SK-N-SH (cell line): ENCODE measurements at regions of chr11 and their contacts with region 1.

Region 1: GRCh38 chr11:69909561-69910496 is 90.6 kb upstream of the FGF3 start:
- DNase-seq: peak; percentile 74
- H3K4me3 ChIP-seq: no peak overlapping the region
- H3K27ac ChIP-seq: peak overlapping the region in 1 of 2 experiments; percentile 55; a peak in 1 of 4 replicates
- H3K4me1 ChIP-seq: peaks cover 0 to 66% of the 10 kb centered on the region in 2 experiments; a peak in 1 of 4 replicates
- H3K27me3 ChIP-seq: no peaks in the 10 kb centered on the region
- CTCF ChIP-seq: peak; percentile 76
- EP300 ChIP-seq: no peak
- RAD21 ChIP-seq: peak; percentile 33

Region 2: DNA sequence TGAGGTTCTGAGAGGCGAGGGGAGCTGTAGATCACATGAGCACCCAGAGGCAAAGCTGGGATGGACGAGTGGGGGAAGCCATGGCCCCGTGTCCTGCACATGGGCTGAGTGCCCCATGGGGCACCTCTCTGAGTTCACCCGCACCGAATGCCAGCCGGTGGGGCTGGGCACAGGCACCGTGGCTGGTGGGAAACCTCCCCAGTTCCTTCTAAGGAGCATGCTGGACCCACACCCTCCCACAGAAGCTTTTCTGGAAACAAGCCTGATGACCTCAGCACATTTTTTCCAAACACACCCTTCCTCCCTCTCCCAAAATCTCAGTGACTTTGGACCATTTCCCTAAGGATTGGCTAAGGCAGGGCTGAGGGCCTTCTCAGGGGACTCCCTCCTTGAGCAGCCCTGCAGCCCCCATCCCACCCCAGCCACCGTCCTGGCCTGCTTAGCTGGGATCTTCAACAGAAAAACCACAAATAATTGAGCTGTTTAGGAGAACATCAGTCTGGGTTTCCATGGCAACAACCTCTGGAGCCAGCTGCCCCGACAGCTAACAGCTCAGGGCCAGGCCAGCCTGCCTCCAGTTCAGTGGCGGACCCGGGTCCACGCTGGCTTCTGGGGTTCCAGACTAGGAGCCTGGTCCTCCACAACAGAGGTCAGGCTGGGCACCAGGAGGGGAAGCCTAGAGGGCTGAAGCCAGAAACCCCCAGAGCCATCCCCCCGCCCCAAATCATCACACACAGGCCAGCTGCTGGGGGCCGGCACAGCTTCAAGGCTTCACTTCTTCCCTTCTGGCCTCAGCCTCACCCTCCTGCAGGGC is 446.4 kb before region 1 on chr11:
- CTCF ChIA-PET with region 1: no interaction called
- POLR2A ChIA-PET with region 1: no interaction called
- DNase-seq: peak; percentile 88
- H3K4me3 ChIP-seq: no peak overlapping the region
- H3K27ac ChIP-seq: no peak overlapping the region
- H3K4me1 ChIP-seq: peaks cover 0 to 10% of the 10 kb centered on the region in 2 experiments; a peak in 1 of 4 replicates
- H3K27me3 ChIP-seq: no peaks in the 10 kb centered on the region
- CTCF ChIP-seq: no peak
- EP300 ChIP-seq: no peak
- RAD21 ChIP-seq: no peak

Region 3: GRCh38 chr11:69683764-69684333 is 226.0 kb before region 1 on chr11:
- CTCF ChIA-PET with region 1: interaction called, 55 read pairs
- POLR2A ChIA-PET with region 1: no interaction called
- DNase-seq: no peak
- H3K4me3 ChIP-seq: no peak overlapping the region
- H3K27ac ChIP-seq: no peak overlapping the region
- H3K4me1 ChIP-seq: no peaks in the 10 kb centered on the region; a peak in 1 of 4 replicates
- H3K27me3 ChIP-seq: no peaks in the 10 kb centered on the region
- CTCF ChIP-seq: peak; percentile 47
- EP300 ChIP-seq: no peak
- RAD21 ChIP-seq: peak; percentile 59

Region 4: GRCh38 chr11:69704508-69705253 is 205.1 kb before region 1 on chr11:
- CTCF ChIA-PET with region 1: interaction called, 21 read pairs
- POLR2A ChIA-PET with region 1: no interaction called
- DNase-seq: peak; percentile 91
- H3K4me3 ChIP-seq: peak overlapping the region; percentile 31 to 41; a peak in 3 of 4 replicates
- H3K27ac ChIP-seq: no peak overlapping the region
- H3K4me1 ChIP-seq: peaks cover 0 to 13% of the 10 kb centered on the region in 2 experiments; a peak in 2 of 4 replicates
- H3K27me3 ChIP-seq: peaks cover 38% of the 10 kb centered on the region
- CTCF ChIP-seq: peak; percentile 68
- EP300 ChIP-seq: no peak
- RAD21 ChIP-seq: peak; percentile 73

Region 5: GRCh38 chr11:69718147-69718546 is 191.7 kb before region 1 on chr11:
- CTCF ChIA-PET with region 1: interaction called, 11 read pairs
- POLR2A ChIA-PET with region 1: no interaction called
- DNase-seq: peak; percentile 73
- H3K4me3 ChIP-seq: no peak overlapping the region
- H3K27ac ChIP-seq: no peak overlapping the region
- H3K4me1 ChIP-seq: no peaks in the 10 kb centered on the region; a peak in 1 of 4 replicates
- H3K27me3 ChIP-seq: peaks cover 35% of the 10 kb centered on the region; the same call in 1 of the 2 replicates
- CTCF ChIP-seq: peak; percentile 58
- EP300 ChIP-seq: no peak
- RAD21 ChIP-seq: peak; percentile 39

Region 6: DNA sequence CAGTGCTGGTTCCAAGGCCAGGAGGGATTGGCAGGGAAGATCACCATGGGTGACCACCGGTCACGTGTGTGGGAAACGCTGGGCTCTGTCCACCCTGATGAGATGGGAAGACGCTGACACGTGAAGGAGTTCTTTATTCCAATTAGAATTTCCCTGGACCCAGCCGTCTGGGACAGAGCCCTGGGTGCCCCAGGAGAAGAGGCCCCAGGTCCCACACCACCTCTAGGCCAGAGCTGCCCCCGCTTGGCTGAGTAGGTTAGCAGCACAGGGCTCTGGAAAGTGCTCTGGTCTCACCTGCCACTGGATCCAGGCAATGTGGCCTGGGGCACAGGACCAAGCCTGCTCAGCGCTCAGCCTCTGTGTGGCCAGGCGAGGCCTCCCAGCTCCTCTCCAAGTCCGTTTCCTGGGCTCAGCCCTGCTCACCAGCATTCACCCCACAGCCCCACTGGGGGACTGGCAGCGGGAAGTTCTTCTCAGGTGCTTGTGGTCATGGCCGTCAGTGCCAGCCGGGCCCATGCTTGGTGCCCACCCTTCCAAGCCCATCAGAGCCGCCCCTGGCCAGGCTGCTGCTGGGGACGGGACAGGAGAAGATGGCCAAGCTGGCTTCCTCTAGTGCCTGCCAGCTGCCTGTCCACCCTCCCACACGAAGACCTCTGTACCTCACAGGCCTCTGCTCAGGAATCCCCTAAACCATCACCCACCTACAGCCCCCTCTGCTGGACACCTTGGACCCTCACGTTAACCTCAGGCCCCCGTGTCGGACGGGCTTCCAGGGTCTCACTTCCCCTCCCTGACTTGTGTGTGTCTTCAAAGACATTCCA is 28.2 kb before region 1 on chr11:
- CTCF ChIA-PET with region 1: interaction called, 249 read pairs
- POLR2A ChIA-PET with region 1: no interaction called
- DNase-seq: no peak
- H3K4me3 ChIP-seq: no peak overlapping the region
- H3K27ac ChIP-seq: no peak overlapping the region
- H3K4me1 ChIP-seq: peaks cover 0 to 9% of the 10 kb centered on the region in 2 experiments; a peak in 1 of 4 replicates
- H3K27me3 ChIP-seq: no peaks in the 10 kb centered on the region
- CTCF ChIP-seq: no peak; the same call in 1 of the 2 replicates
- EP300 ChIP-seq: no peak
- RAD21 ChIP-seq: no peak

Region 7: DNA sequence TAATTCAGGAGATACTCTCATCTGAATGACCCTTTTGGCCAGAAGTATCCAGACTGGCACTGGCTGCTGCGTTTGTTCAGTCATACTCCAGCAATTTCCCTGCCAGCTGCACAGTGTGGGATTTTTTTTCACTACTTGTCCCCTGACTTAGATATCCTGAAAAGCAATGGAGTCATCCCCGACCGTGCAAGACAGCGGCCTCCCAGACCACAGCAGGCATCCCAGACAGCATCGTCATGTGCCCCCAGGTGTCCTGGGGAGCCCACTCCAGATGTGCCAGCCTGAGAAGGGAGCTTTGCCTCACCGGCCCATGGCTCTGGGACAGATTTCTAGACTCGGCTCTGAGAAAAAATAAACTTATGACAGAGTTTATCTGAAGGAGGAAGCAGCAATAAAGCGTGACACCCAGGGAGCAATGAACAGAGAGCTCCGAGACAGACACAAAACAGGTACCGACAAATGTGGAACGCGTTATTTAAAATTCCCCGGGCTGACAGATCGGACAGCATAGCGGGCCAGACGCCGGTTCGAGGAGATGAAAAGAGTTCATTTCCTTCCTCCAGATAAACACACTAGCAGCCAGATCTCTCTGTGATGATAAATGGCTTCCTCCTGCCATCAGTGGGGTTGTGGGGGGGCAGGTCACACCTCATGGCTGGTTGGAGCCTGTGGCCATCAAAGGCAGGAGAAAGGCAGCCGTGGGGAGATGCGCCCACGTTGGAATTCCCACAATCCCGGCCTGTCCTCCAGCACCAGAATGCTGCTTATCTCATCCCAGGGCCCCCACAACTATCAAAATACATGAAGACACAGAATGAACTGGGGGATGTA is 15.8 kb after region 1 on chr11:
- CTCF ChIA-PET with region 1: interaction called, 28 read pairs
- POLR2A ChIA-PET with region 1: no interaction called
- DNase-seq: peak; percentile 68
- H3K4me3 ChIP-seq: no peak overlapping the region
- H3K27ac ChIP-seq: peak overlapping the region in 1 of 2 experiments; percentile 45; a peak in 2 of 4 replicates
- H3K4me1 ChIP-seq: peaks cover 0 to 17% of the 10 kb centered on the region in 2 experiments; a peak in 1 of 4 replicates
- H3K27me3 ChIP-seq: no peaks in the 10 kb centered on the region; the same call in 1 of the 2 replicates
- CTCF ChIP-seq: no peak
- EP300 ChIP-seq: no peak
- RAD21 ChIP-seq: no peak

Region 8: GRCh38 chr11:70191495-70192140 is 281.8 kb after region 1 on chr11:
- CTCF ChIA-PET with region 1: interaction called, 80 read pairs
- POLR2A ChIA-PET with region 1: no interaction called
- DNase-seq: peak; percentile 88
- H3K4me3 ChIP-seq: no peak overlapping the region; a peak in 1 of 4 replicates
- H3K27ac ChIP-seq: no peak overlapping the region
- H3K4me1 ChIP-seq: no peaks in the 10 kb centered on the region
- H3K27me3 ChIP-seq: peaks cover 14% of the 10 kb centered on the region
- CTCF ChIP-seq: peak; percentile 70
- EP300 ChIP-seq: no peak
- RAD21 ChIP-seq: peak; percentile 92